ENCODE measurements at regions of chr5 and their contacts with region 1.

Region 1: DNA sequence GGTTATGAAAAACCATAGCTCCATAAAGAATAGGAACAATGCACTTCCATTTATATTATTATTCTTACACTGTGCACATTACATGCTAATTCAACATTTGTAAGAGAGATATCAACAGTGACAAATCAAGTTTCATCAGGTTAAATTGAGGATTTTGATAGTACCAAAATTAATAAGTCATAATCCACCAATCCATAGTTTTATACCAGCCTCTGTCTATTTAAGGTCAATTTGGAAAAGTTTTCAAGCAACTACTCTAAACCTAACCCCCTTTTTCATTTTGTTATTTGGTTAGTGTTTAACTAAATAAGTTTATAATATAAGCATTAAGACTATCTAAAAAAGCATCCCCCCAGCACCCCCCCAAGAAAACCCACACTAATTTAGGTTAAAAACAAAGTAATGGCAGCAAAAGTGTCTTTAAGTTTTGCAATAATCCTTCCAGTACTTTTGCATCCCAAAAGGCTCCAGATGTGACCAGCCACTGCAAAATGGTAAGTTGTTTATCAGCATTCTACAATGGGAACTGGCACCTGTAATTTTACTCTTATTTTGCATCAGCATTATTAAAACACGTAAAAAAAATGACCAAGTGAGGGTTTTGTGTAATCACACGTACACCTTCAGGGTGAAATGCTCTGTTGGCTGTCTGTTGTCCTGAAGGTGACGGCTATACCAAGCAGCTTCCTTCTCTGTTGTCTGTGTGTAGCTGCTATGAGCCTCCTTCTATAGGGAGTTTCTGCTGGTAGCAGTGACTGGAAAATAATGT is 36.8 kb upstream of the SSBP2 start:
- DNase-seq: no peak
- H3K4me3 ChIP-seq: no peak overlapping the region
- CTCF ChIP-seq: no peak

Region 2: GRCh38 chr5:81805086-81805485 is 17.4 kb after region 1 on chr5:
- CTCF ChIA-PET with region 1: no interaction called
- POLR2A ChIA-PET with region 1: no interaction called
- DNase-seq: no peak
- H3K4me3 ChIP-seq: no peak overlapping the region
- CTCF ChIP-seq: no peak

Region 3: GRCh38 chr5:81851481-81852178 is 64.0 kb after region 1 on chr5:
- CTCF ChIA-PET with region 1: interaction called, 17 read pairs
- POLR2A ChIA-PET with region 1: interaction called, 14 read pairs
- DNase-seq: peak; percentile 69
- H3K4me3 ChIP-seq: peak overlapping the region; percentile 54
- CTCF ChIP-seq: no peak